ENCODE measurements at regions of chr17 and their contacts with region 1.

Region 1: GRCh38 chr17:35766903-35767510 is 6.3 kb downstream of the C17orf50 start:
- DNase-seq: no peak
- H3K4me3 ChIP-seq: no peak overlapping the region
- H3K27ac ChIP-seq: no peak overlapping the region
- H3K4me1 ChIP-seq: no peaks in the 10 kb centered on the region
- H3K27me3 ChIP-seq: no peaks in the 10 kb centered on the region
- CTCF ChIP-seq: peak; percentile 40 to 45 (median 42)
- POLR2A ChIP-seq: no peak

Region 2: DNA sequence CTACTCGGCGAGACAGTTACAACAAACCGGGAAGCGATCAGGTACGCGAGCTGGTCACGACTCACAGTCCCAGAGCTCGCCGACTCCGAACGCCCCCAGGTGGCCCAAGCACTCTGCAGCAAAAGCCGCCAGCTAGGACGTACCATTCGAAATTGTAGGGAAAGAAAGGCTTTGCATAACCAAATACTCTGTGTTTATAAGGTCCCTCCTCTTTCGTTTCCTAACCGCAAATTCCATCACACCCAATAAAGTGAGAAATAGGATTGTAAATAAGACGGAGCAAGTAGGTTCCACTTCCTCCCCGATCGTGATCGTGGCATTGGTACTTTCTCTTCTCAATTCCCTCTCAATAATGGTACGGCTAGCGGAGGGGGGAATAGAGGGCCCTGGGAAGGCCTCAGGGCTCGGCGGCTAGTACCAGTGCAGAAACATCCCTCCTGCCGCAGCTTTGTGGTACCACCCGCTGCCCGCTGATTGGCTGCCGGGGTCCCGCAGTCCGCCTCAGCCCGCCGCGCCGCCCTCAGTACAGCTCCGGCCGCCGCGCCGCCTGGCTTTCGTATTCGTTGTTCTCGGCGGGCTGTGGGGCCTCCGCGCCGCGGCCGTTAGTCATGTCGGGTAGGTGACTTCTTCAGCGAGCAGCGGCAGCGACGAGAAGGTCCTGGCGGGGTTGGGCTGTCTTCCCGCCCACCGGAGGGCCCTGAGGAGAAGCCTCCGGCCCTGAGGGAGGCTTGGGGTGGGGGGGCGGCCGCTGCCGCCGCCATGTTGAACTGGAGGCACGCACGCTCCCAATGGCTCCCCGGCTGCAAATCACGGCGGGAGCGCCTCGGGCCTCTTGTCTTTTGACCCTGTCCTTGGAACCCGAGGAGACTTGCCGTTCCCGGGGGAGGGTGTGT is 42.2 kb after region 1 on chr17 and contains the start of gene TAF15:
- intact Hi-C with region 1: loop called (anchors 5 kb)
- DNase-seq: peak; percentile 95 to 96
- H3K4me3 ChIP-seq: peak within 1 kb of the TSS; percentile 98 to 100
- H3K27ac ChIP-seq: peak within 1 kb of the TSS; percentile 98 to 99
- H3K4me1 ChIP-seq: peaks cover 0 to 4% of the 10 kb centered on the region in 2 donors
- H3K27me3 ChIP-seq: no peaks in the 10 kb centered on the region
- CTCF ChIP-seq: peak; percentile 63 to 89 (median 71)
- POLR2A ChIP-seq: peak; percentile 97 to 99
- total RNA-seq, gene TAF15: 68.5 to 167 (median 113) TPM